Kidney (tissue), 22 donors: ENCODE measurements at regions of chr11 and their contacts with region 1.

Region 1: GRCh38 chr11:7892840-7893254 is 38.2 kb downstream of the OR10A6 start:
- DNase-seq: peak in 2 of 5 donors; percentile 73 to 75
- H3K4me3 ChIP-seq: no peak overlapping the region
- H3K27ac ChIP-seq: peak overlapping the region in 1 of 2 donors; percentile 33
- H3K4me1 ChIP-seq: peaks cover 0 to 18% (median 5%) of the 10 kb centered on the region in 3 donors
- H3K27me3 ChIP-seq: no peaks in the 10 kb centered on the region
- CTCF ChIP-seq: peak; percentile 79

Region 2: GRCh38 chr11:7986768-7987559 is 94.1 kb after region 1 on chr11 and contains the start of gene EIF3F:
- intact Hi-C with region 1: loop called (anchors 10 kb)
- DNase-seq: peak; percentile 94 to 100 (median 97)
- H3K4me3 ChIP-seq: peak within 1 kb of the TSS; percentile 82 to 99 (median 98)
- H3K27ac ChIP-seq: peak within 1 kb of the TSS; percentile 48 to 56
- H3K4me1 ChIP-seq: peaks cover 2 to 16% (median 15%) of the 10 kb centered on the region in 3 donors
- H3K27me3 ChIP-seq: no peaks in the 10 kb centered on the region
- CTCF ChIP-seq: peak; percentile 91
- total RNA-seq, gene EIF3F: 174 TPM